HepG2 (cell line): ENCODE measurements at regions of chr11 and their contacts with region 1.

Region 1: DNA sequence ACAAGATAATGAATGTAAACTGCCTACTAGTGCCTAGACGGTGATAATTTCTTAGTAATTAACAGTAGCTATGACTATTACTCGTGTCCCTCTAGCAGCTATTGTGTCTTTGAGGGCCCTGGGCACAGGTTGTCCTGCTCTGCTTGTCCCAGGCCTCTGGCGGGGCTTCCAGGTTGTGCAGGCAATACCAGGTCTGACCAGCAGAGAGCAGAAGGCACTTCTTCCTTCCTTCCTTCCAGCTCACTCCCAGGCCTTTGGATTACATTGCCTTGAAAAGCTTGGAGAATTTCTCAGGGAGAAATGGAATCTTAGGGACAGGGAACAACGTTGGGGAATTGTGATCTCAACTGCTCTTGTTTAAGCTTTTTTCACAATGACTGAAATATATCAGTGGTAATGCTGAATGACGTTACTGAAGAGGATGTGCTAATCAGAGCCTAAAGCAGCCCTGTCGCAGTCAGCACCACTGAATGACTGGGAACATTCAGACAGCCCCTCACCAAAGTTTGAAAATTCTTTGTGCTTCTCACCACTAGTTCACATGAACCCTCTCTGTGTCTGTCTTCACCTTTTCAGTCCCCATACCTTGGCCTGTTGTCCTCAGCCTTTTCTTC is 8.4 kb upstream of the CCKBR start:
- DNase-seq: peak; percentile 59
- ATAC-seq: peak; percentile 99
- H3K4me3 ChIP-seq: no peak overlapping the region
- H3K27ac ChIP-seq: no peak overlapping the region
- H3K4me1 ChIP-seq: no peaks in the 10 kb centered on the region
- H3K27me3 ChIP-seq: no peaks in the 10 kb centered on the region
- CTCF ChIP-seq: peak; percentile 79
- EP300 ChIP-seq: no peak
- POLR2A ChIP-seq: no peak
- RAD21 ChIP-seq: peak; percentile 64; the same call in 1 of the 2 replicates

Region 2: GRCh38 chr11:6012035-6012668 is 239.1 kb before region 1 on chr11:
- CTCF ChIA-PET with region 1: no interaction called
- POLR2A ChIA-PET with region 1: no interaction called
- in situ Hi-C with region 1: no loop called
- intact Hi-C with region 1: no loop called
- DNase-seq: no peak
- ATAC-seq: no peak
- H3K4me3 ChIP-seq: no peak overlapping the region
- H3K27ac ChIP-seq: no peak overlapping the region
- H3K4me1 ChIP-seq: no peaks in the 10 kb centered on the region
- H3K27me3 ChIP-seq: no peaks in the 10 kb centered on the region
- CTCF ChIP-seq: no peak
- EP300 ChIP-seq: no peak
- POLR2A ChIP-seq: no peak
- RAD21 ChIP-seq: no peak

Region 3: DNA sequence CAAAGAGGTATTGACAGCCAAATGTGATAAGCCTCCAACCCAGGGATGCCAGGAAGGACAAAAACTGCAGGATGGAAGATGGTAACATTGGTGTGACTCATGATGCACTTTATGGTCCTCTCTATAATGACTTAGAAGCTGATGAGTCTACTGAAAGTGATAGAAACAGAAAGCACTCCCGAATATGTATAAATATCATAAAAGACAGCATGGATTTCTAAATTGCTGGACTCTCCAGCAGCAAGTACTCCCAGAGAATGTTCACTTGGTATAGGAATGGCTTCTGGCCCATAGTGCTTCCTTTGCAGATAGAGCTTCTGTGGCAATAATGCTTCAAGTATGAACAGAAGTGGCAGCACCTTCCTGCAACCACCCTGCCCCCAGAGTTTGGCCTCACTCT is 81.0 kb before region 1 on chr11 and contains the start of gene OR52B2:
- CTCF ChIA-PET with region 1: no interaction called
- POLR2A ChIA-PET with region 1: no interaction called
- in situ Hi-C with region 1: no loop called
- intact Hi-C with region 1: no loop called
- DNase-seq: no peak
- ATAC-seq: no peak
- H3K4me3 ChIP-seq: no peak within 1 kb of the TSS
- H3K27ac ChIP-seq: no peak within 1 kb of the TSS
- H3K4me1 ChIP-seq: no peaks in the 10 kb centered on the region
- H3K27me3 ChIP-seq: no peaks in the 10 kb centered on the region; a peak in 1 of 5 replicates
- CTCF ChIP-seq: no peak
- EP300 ChIP-seq: no peak
- POLR2A ChIP-seq: no peak
- RAD21 ChIP-seq: no peak
- total RNA-seq, gene OR52B2: not detected in 2 replicates

Region 4: GRCh38 chr11:6298605-6299004 is 47.4 kb after region 1 on chr11:
- CTCF ChIA-PET with region 1: no interaction called
- POLR2A ChIA-PET with region 1: no interaction called
- in situ Hi-C with region 1: no loop called
- intact Hi-C with region 1: loop called (anchors 1 kb)
- DNase-seq: peak; percentile 38
- ATAC-seq: peak; percentile 100
- H3K4me3 ChIP-seq: no peak overlapping the region
- H3K27ac ChIP-seq: no peak overlapping the region
- H3K4me1 ChIP-seq: no peaks in the 10 kb centered on the region
- H3K27me3 ChIP-seq: peaks cover under 1% of the 10 kb centered on the region in 2 experiments; a peak in 3 of 5 replicates
- CTCF ChIP-seq: peak; percentile 84
- EP300 ChIP-seq: no peak
- POLR2A ChIP-seq: no peak
- RAD21 ChIP-seq: no peak

Region 5: GRCh38 chr11:6315811-6316425 is 64.7 kb after region 1 on chr11:
- CTCF ChIA-PET with region 1: no interaction called
- POLR2A ChIA-PET with region 1: no interaction called
- in situ Hi-C with region 1: no loop called
- intact Hi-C with region 1: loop called (anchors 1 kb)
- DNase-seq: peak; percentile 45
- ATAC-seq: peak; percentile 98
- H3K4me3 ChIP-seq: no peak overlapping the region
- H3K27ac ChIP-seq: no peak overlapping the region
- H3K4me1 ChIP-seq: no peaks in the 10 kb centered on the region
- H3K27me3 ChIP-seq: peaks cover 1 to 36% of the 10 kb centered on the region in 2 experiments; a peak in 3 of 5 replicates
- CTCF ChIP-seq: peak; percentile 89
- EP300 ChIP-seq: no peak
- POLR2A ChIP-seq: no peak
- RAD21 ChIP-seq: 0 out of 2 replicates have a peak, but pooled peaks have one; percentile 30

Region 6: GRCh38 chr11:6362873-6363678 is 111.8 kb after region 1 on chr11:
- CTCF ChIA-PET with region 1: interaction called, 13 read pairs
- POLR2A ChIA-PET with region 1: no interaction called
- in situ Hi-C with region 1: no loop called
- intact Hi-C with region 1: no loop called
- DNase-seq: peak; percentile 64
- ATAC-seq: peak; percentile 99
- H3K4me3 ChIP-seq: no peak overlapping the region
- H3K27ac ChIP-seq: no peak overlapping the region
- H3K4me1 ChIP-seq: peaks cover 12% of the 10 kb centered on the region
- H3K27me3 ChIP-seq: peaks cover 0 to 9% of the 10 kb centered on the region in 2 experiments; a peak in 2 of 5 replicates
- CTCF ChIP-seq: peak; percentile 95
- EP300 ChIP-seq: no peak
- POLR2A ChIP-seq: no peak
- RAD21 ChIP-seq: peak; percentile 56; the same call in 1 of the 2 replicates